ENCODE measurements at regions of chr18 and their contacts with region 1.

Region 1: DNA sequence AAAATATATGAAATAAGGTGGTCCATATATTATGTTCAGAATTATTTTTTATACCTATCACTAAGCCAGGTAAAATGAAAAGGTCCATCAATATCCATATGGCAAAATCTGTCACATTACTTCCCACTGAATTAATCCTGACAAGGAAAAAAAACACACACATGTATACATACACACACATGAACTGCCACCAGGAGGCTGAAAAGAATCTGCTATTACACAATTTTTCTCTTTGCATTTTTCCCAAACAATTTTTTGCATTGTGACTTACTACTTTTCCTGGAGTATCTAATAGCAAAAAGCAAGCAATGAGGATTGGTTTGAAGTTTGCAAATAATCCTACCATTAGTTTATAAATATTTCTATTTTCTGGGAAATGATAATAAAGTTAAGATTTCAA is 128.2 kb upstream of the CD226 start:
- ATAC-seq: no peak
- H3K4me3 ChIP-seq: no peak overlapping the region
- H3K27ac ChIP-seq: no peak overlapping the region
- H3K4me1 ChIP-seq: peaks cover 0 to 11% of the 10 kb centered on the region in 2 donors

Region 2: DNA sequence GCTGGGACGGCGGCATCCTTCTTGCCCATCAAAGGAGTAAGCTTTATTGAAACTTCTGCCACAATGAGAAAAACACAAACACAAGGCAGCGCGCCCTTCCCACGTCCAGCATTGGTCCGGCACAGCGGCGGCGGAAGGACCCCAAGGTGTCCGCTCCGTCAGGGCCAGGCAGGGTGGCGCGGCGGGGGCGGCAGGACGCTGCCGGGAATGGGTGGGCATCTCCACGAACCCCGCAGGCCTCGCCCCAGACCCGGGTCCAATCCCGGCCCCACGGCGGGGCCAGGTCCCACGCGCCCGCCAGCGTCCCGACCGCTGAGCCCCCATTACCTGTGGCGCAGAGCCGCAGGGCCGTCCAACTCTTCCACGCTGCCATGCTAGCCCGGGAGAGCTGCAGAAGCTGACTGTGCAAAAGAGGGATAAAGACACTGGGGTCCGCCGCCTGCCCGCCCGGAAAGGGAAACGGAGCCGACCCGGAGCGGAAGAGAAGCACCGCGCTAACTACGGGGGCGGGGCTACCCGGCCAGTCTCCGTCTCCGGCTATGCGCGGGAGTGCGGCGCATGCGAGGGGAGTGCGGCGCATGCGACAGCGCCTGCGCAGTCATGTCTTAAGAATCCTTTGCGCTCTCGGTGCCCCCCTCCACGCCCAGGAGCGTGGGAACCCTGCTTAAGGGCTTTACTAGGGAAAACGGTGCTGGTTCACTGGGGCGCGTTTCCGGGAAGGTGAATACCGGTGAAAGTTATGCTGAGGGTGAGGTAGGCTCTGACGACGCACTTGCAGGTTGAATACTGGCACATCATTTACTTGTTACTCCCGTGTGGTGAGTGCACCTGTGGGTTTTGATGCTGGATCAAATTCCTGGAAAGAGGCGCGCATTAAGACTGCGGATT is 1361.1 kb before region 1 on chr18 and contains the start of gene TMX3:
- in situ Hi-C with region 1: loop called in 1 of 9 experiments (anchors 25 kb)
- ATAC-seq: peak; percentile 95 to 98 (median 98)
- H3K4me3 ChIP-seq: peak within 1 kb of the TSS; percentile 52 to 88 (median 77)
- H3K27ac ChIP-seq: peak within 1 kb of the TSS; percentile 62 to 75
- H3K4me1 ChIP-seq: peaks cover 5 to 10% of the 10 kb centered on the region in 2 donors
- total RNA-seq, gene TMX3: 25.4 to 89.9 (median 43.4) TPM

Region 3: DNA sequence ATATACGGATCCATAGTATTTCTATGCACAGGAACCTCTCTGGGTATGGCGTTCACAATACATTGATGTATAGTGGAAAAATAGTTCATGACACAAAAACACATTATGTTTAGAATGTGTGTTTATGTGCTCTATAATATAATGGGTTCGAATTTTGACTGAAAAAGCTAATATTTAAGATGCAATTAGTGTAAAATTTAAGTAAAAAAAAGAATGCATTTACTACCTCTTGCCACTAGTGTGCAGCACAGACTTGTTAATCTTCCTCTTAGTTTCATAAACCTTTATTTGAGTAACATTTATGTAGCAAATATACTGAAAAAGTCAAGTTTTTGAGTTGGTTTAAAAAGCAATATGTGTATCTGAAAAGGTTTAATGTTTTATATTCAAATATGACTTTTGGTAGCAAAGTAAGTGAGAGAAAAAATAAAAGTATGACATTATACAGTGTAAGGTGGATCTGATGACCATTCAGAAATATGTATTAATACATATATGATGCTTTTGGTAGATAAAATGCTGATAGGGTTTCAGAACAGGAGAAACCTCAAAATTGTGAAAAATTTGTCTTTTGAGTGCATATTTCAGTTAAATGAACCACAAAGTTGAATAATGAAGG is 1228.6 kb before region 1 on chr18:
- in situ Hi-C with region 1: loop called in 4 of 9 experiments (anchors 25 kb)
- ATAC-seq: no peak
- H3K4me3 ChIP-seq: no peak overlapping the region
- H3K27ac ChIP-seq: no peak overlapping the region
- H3K4me1 ChIP-seq: no peaks in the 10 kb centered on the region

Region 4: DNA sequence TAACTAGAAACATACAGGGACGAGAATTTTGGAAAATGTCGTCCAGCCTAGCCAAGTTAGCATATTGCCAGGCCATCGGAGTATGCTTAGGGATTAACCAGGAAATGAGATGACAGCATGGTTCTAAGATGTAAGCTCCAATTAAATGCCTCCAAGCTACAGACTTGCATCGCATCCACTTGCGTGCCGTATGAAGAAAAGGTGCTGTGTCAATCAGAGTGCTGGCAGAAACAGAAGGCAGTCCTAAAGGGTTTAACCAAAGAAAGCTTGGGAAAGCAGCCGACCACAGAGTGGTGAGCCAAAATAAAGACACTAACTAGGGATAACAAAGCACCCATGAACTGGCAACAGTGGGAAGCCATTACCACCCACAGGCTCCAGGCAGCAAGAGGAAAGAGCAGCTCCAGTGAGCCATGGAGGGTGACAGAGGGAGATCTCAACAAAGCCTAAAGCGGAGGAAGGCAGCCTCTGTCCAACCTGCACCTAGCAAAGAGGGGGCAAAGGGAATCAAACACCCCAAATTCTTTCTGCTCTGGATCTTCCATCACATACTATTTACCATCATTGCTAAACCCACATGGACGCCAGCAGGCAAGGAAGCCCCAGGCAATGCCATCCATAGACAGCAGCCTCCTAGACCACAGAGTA is 185.4 kb after region 1 on chr18:
- in situ Hi-C with region 1: no loop called
- ATAC-seq: no peak
- H3K4me3 ChIP-seq: no peak overlapping the region
- H3K27ac ChIP-seq: no peak overlapping the region
- H3K4me1 ChIP-seq: peaks cover 1 to 11% of the 10 kb centered on the region in 2 donors